ENCODE measurements at regions of chr13 and their contacts with region 1.

Region 1: DNA sequence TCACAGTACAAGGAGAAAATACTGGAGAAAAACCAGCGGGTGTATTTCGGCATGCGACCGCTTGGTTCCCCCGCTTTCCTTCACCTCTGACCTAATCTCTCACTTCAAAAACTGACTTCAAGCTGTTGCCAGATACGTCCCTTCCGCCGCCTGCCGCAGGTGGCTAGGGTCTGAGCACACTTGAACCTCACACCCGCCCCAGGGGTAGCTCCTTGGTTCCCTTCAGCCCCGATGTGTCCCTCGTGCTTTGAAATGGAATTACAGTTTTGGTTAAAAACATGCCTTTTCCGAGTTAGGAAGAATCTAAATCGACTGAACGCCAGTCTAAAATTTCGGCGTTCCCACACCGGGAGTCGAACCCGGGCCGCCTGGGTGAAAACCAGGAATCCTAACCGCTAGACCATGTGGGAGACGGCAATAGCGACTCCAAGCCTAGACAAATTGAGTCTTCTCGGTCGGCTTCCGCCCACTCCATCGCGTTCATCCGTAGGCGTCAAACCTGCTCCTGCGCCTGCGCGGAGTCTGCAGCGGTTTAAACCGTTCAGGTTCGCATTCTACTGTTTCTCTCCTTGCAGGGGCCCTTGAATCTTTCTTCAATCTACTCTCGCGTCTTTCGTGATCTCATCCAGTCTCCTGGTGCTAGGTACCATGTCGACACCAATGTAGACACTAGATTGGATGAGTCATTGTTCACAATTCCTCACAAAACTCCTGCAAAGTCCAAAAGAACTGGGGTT is 71.5 kb downstream of the NUFIP1 start:
- DNase-seq: peak; percentile 96 to 98
- ATAC-seq: peak; percentile 94
- H3K4me3 ChIP-seq: peak overlapping the region; percentile 29 to 32
- H3K27ac ChIP-seq: peak overlapping the region; percentile 80 to 98
- H3K4me1 ChIP-seq: peaks cover 0 to 3% of the 10 kb centered on the region in 2 donors
- H3K27me3 ChIP-seq: no peaks in the 10 kb centered on the region

Region 2: GRCh38 chr13:44577236-44578066 is 340.3 kb before region 1 on chr13:
- intact Hi-C with region 1: loop called in 1 of 2 experiments (anchors 5 kb)
- DNase-seq: peak; percentile 98 to 99
- ATAC-seq: peak; percentile 94
- H3K4me3 ChIP-seq: peak overlapping the region; percentile 95 to 97
- H3K27ac ChIP-seq: peak overlapping the region; percentile 95 to 96
- H3K4me1 ChIP-seq: peaks cover 3% of the 10 kb centered on the region in 2 donors
- H3K27me3 ChIP-seq: no peaks in the 10 kb centered on the region

Region 3: GRCh38 chr13:44710576-44710975 is 207.2 kb before region 1 on chr13:
- intact Hi-C with region 1: loop called in 1 of 2 experiments (anchors 2 kb)
- DNase-seq: no peak
- ATAC-seq: no peak
- H3K4me3 ChIP-seq: no peak overlapping the region
- H3K27ac ChIP-seq: peak overlapping the region; percentile 76 to 80
- H3K4me1 ChIP-seq: peaks cover 1 to 12% of the 10 kb centered on the region in 2 donors
- H3K27me3 ChIP-seq: no peaks in the 10 kb centered on the region

Region 4: GRCh38 chr13:44719857-44720671 is 197.7 kb before region 1 on chr13:
- intact Hi-C with region 1: loop called (anchors 2 to 5 kb)
- DNase-seq: peak in 1 of 2 donors; percentile 55
- ATAC-seq: peak; percentile 63
- H3K4me3 ChIP-seq: no peak overlapping the region
- H3K27ac ChIP-seq: peak overlapping the region; percentile 11 to 86
- H3K4me1 ChIP-seq: peaks cover 4 to 5% of the 10 kb centered on the region in 2 donors
- H3K27me3 ChIP-seq: no peaks in the 10 kb centered on the region

Region 5: DNA sequence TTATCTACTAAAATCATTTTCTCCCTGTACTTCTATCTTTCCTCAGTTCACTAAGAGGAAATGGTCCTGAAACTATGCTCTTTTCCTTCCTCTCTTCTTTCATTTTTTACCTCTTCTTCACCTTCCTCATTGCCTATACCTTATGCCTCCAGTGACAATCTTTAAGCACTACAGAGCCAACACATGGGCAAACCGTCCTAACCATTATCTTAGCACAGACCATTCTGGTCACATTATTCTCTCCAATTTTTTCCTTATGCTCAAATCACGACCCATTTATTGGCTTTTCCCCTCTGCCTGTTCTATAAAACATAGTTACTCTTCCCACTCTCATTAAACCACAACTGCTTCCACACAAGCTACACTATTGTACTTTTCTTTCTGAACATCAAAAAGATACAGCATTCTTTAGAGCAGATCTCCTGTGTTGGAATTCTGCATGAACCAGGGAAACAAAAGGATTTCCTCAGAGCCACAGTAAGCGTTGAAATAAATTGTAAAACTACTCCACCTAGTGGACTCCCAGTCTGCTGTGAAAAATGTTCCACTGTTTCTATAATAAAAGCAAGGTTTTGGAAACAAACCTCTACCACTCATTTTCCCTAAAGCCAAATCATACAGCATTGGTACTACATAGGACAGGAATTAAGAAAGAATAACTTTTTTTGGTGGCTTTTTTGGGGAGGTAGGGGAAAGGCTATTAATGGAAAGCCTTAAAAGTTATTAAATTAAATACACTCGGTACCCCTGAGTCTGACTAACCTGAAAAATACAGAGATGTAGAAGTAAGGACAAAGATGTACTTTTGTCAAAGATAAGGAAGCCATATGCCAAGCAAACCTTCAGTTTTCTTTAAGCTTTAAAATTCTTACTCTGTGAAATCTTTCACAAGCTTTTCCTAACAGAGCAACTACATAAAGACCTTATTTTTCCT is 52.1 kb after region 1 on chr13:
- intact Hi-C with region 1: loop called (anchors 5 kb)
- DNase-seq: no peak
- ATAC-seq: peak; percentile 73
- H3K4me3 ChIP-seq: no peak overlapping the region
- H3K27ac ChIP-seq: no peak overlapping the region
- H3K4me1 ChIP-seq: peaks cover 0 to 2% of the 10 kb centered on the region in 2 donors
- H3K27me3 ChIP-seq: no peaks in the 10 kb centered on the region